Ovary (tissue), 10 donors: ENCODE measurements at regions of chr14 and their contacts with region 1.

Region 1: GRCh38 chr14:32939254-32940065 is 781 bp downstream of the NPAS3 start:
- DNase-seq: peak; percentile 81 to 86 (median 85)
- H3K4me3 ChIP-seq: peak overlapping the region; percentile 72
- H3K27ac ChIP-seq: peak overlapping the region; percentile 78 to 85
- H3K4me1 ChIP-seq: peaks cover 2% of the 10 kb centered on the region
- H3K27me3 ChIP-seq: no peaks in the 10 kb centered on the region
- CTCF ChIP-seq: no peak
- EP300 ChIP-seq: no peak
- POLR2A ChIP-seq: no peak

Region 2: DNA sequence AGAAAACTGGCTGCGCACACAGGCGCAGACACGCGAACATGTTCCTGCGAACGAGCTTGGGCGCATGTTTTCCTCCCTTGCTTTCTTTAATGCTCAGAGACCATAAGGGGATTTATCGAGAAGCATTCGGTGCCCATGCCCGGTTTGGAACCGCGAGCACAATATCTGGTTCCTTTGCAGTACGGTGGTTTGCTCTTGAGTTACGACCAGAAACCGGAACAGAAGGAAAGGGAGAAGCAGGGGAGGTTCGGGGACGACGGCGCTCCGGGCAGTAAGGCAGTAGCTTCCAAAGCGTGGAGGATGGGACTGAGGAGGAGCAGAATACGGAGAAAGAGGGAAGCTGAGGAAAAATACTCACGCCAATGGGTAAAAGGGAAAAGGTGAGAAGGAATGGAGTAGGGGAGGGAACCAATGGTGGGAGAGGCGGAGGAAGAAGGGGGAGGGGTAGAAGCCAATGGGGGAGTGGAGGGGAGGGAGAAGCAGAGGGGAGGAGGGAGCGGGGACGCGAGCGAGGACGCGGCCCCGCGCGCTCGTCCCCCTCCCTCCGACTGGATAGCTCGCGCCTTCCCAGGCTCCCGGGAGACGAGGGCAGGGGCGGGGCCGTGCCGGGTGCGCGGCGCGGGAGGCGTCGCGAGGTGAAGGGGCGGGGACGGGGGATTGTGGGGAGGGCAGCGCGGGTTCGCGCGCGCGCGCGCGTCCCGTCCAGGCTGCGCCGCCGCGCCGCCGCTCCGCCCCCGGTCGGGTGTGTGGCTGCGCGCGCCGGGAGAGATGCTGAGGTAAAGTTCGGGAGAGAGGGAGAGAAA is 863.0 kb before region 1 on chr14:
- intact Hi-C with region 1: loop called in 1 of 4 experiments (anchors 10 kb)
- DNase-seq: peak; percentile 97 to 98 (median 98)
- H3K4me3 ChIP-seq: peak overlapping the region; percentile 95
- H3K27ac ChIP-seq: peak overlapping the region; percentile 95 to 99
- H3K4me1 ChIP-seq: no peaks in the 10 kb centered on the region
- H3K27me3 ChIP-seq: no peaks in the 10 kb centered on the region
- CTCF ChIP-seq: no peak
- EP300 ChIP-seq: no peak
- POLR2A ChIP-seq: peak; percentile 72

Region 3: GRCh38 chr14:33432407-33433023 is 493.1 kb after region 1 on chr14:
- intact Hi-C with region 1: no loop called
- DNase-seq: no peak
- H3K4me3 ChIP-seq: no peak overlapping the region
- H3K27ac ChIP-seq: no peak overlapping the region
- H3K4me1 ChIP-seq: no peaks in the 10 kb centered on the region
- H3K27me3 ChIP-seq: no peaks in the 10 kb centered on the region
- CTCF ChIP-seq: no peak
- EP300 ChIP-seq: no peak
- POLR2A ChIP-seq: no peak

Region 4: GRCh38 chr14:33792720-33793368 is 853.4 kb after region 1 on chr14:
- intact Hi-C with region 1: loop called in 1 of 4 experiments (anchors 2 kb)
- DNase-seq: peak; percentile 80 to 92 (median 88)
- H3K4me3 ChIP-seq: peak overlapping the region; percentile 13
- H3K27ac ChIP-seq: no peak overlapping the region
- H3K4me1 ChIP-seq: no peaks in the 10 kb centered on the region
- H3K27me3 ChIP-seq: no peaks in the 10 kb centered on the region
- CTCF ChIP-seq: peak; percentile 74
- EP300 ChIP-seq: no peak
- POLR2A ChIP-seq: no peak